GM10248 (cell line): ENCODE measurements at regions of chr10 and their contacts with region 1.

Region 1: GRCh38 chr10:70115948-70116682 is 16.5 kb downstream of the AIFM2 start:
- DNase-seq: peak; percentile 83
- CTCF ChIP-seq: peak; percentile 77

Region 2: GRCh38 chr10:70093335-70093944 is 22.7 kb before region 1 on chr10:
- CTCF ChIA-PET with region 1: interaction called, 48 read pairs
- POLR2A ChIA-PET with region 1: no interaction called
- DNase-seq: no peak
- CTCF ChIP-seq: no peak

Region 3: DNA sequence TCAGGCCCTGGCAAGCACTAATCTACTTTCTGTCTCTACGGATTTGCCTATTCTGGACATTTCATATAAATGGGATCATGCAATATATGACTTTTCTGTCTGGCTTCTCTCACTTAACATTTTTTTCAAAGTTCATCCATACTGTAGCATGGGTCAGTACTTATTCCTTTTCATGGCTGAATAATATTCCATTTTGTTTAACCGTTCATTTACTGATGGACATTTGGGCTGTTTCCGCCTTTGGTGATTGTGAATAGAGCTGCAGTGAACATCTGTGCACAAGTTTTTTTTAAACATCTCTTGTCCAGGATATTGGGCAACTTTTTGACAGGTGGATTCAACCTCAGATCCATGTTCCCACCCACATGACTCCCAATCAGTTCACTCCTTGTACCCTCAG is 14.4 kb before region 1 on chr10:
- CTCF ChIA-PET with region 1: interaction called, 50 read pairs
- POLR2A ChIA-PET with region 1: no interaction called
- DNase-seq: no peak
- CTCF ChIP-seq: no peak

Region 4: DNA sequence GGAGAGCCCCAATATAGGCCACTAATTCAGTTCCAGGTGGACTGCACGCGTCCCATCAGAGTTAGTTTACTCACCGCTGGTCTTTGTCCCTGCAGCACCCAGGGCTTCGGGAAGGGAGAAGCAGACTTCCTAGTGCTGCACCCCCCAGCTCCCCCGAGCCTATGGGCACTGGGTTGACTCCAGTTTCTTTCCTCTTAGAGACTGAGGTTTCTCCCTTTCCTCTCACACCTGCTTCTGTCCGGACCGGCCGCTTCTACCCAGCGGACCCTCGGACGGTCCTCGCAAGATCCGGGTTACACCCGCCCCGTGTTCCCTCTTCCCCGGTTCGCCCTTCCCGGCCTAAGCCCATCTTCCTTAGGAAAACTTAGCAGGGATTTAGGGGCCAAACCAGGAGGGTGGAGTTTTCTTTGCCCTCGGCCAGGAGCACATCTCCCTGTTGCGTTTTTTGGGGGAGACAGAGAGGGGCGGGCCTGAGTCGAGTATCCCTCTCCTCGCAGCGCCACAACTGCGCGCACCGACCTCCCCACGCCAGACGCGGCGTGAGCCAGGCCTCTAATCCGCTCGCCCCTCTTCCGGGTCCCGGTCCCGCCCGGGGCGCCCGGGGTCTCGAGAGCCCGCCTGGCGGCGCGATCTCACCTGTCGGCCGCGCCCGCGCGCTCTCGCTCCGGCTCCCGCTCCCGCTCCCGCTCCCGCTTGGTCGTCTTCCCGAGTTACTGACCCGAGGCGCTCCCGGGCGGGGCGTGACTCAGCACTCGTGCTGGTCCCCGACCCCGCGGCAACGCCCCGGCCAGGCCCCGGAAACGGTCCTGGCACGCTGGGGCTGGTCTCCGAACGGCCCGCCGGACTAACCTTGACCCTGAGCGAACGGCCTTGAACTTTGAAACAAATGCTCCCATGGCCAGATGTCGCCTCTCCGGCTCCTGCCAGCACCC is 16.2 kb after region 1 on chr10 and contains the start of gene AIFM2:
- CTCF ChIA-PET with region 1: interaction called, 100 read pairs
- POLR2A ChIA-PET with region 1: no interaction called
- DNase-seq: peak; percentile 82
- CTCF ChIP-seq: no peak